Activated B cell treated with CpG ODN at 0.5 μM for 24 hours (primary cell): ENCODE measurements at regions of chr10 and their contacts with region 1.

Region 1: GRCh38 chr10:88027570-88027969 is 164.1 kb downstream of the PTEN start:
- DNase-seq: no peak
- ATAC-seq: peak; percentile 77
- H3K4me3 Mint-ChIP-seq: peak overlapping the region; percentile 39
- H3K27ac Mint-ChIP-seq: peak overlapping the region; percentile 81
- H3K4me1 Mint-ChIP-seq: peaks cover 24% of the 10 kb centered on the region
- H3K27me3 Mint-ChIP-seq: no peaks in the 10 kb centered on the region
- CTCF ChIP-seq: no peak

Region 2: DNA sequence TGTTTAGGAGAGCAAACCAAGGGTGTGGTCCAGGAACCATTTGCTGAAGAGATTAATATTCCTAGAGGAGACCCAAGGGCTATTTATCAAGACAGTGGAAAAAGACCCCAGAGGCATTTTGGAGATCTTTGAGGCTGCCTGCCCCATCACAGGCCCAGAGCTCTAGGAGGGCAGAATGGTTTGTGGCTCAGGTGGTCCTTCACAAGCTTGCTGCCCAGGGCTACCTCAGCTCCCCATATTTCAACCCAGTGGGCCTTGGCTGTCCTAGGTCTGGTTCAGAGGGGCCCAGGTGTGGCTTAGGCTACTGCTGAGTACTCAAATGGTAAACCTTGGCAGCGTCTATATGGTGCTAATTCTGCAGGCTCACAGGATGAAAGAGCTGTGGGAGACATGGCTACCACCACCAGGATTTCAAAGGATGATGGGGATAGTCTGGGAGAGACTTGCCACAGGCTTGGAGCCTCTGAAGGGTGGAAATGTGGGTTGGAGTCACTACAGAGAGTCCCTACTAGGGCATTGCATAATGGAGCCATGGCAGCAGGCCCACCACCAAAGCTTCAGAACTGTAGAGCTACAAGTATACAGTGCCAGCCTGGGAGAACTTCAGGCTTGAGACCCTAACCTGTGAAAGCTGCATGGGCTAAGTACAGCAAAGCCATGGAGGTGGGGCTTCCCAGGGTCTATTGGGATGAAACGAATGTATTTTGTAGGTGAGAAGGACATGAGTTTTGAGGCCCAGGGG is 139.9 kb before region 1 on chr10:
- CTCF ChIA-PET with region 1: no interaction called
- POLR2A ChIA-PET with region 1: no interaction called
- intact Hi-C with region 1: no loop called
- DNase-seq: no peak
- ATAC-seq: peak; percentile 21
- H3K4me3 Mint-ChIP-seq: no peak overlapping the region
- H3K27ac Mint-ChIP-seq: no peak overlapping the region
- H3K4me1 Mint-ChIP-seq: peaks cover 40% of the 10 kb centered on the region
- H3K27me3 Mint-ChIP-seq: no peaks in the 10 kb centered on the region
- CTCF ChIP-seq: no peak

Region 3: DNA sequence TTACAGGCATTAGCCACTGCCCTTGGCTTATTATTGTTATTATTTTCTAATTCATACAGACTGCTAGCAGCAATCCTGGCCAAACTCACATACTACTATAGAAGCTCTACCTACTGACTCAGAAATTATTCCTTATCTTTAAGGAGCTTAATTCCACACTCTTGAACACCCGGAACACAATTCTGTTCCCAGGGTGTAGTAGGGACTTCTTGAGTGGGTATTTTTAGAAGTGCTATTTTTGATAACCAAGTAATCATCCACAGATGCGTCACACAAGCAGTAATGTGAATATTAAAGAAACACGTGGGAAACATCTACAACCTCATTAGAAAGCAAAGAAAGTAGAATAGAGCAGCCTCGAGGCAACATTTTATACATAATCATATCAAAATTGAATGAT is 14.9 kb before region 1 on chr10:
- CTCF ChIA-PET with region 1: no interaction called
- POLR2A ChIA-PET with region 1: no interaction called
- intact Hi-C with region 1: no loop called
- DNase-seq: no peak
- ATAC-seq: no peak
- H3K4me3 Mint-ChIP-seq: no peak overlapping the region
- H3K27ac Mint-ChIP-seq: no peak overlapping the region
- H3K4me1 Mint-ChIP-seq: no peaks in the 10 kb centered on the region
- H3K27me3 Mint-ChIP-seq: no peaks in the 10 kb centered on the region
- CTCF ChIP-seq: no peak

Region 4: DNA sequence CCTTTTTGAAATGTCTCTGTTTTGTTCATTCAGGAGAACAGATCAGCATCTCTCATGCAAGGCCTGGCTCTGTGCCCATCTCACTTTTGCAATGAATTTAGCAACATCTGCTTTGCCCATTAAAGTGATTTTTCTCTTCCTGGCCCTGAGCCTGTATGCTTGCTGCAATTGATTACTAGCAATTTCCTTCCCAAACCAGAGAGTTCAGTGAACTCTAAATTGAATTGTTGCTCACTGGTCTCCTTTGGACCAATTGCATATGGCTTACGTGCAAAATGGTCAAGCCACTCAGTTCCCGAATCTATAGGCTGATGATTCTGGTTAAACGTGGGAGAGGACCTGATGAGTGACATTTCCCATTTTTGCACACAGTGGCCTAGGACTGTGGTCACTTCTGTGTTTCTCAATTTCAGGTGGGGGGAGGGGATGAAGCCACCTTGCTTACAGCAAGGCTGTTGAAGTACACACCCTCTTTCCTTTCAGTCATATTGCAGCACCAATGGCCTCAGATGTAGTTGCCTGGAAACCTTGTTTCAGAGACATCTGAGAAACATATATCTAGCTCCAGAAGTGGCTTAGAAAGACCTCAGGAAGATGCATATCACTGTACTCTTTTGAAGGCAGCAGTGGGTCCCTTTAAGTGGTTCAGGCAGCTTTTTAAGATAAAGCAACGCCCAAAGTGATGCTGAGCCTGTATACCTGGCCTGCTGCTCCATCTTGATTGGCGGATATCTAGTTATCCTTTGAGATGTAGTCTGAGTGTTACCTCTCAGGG is 37.2 kb after region 1 on chr10:
- CTCF ChIA-PET with region 1: no interaction called
- POLR2A ChIA-PET with region 1: interaction called, 3 read pairs
- intact Hi-C with region 1: loop called (anchors 5 kb)
- DNase-seq: no peak
- ATAC-seq: no peak
- H3K4me3 Mint-ChIP-seq: no peak overlapping the region
- H3K27ac Mint-ChIP-seq: no peak overlapping the region
- H3K4me1 Mint-ChIP-seq: peaks cover 95% of the 10 kb centered on the region
- H3K27me3 Mint-ChIP-seq: no peaks in the 10 kb centered on the region
- CTCF ChIP-seq: no peak